Activated CD4-positive, alpha-beta T cell treated with anti-CD3 and anti-CD28 coated beads for 36 hours (primary cell): ENCODE measurements at regions of chr14 and their contacts with region 1.

Region 1: DNA sequence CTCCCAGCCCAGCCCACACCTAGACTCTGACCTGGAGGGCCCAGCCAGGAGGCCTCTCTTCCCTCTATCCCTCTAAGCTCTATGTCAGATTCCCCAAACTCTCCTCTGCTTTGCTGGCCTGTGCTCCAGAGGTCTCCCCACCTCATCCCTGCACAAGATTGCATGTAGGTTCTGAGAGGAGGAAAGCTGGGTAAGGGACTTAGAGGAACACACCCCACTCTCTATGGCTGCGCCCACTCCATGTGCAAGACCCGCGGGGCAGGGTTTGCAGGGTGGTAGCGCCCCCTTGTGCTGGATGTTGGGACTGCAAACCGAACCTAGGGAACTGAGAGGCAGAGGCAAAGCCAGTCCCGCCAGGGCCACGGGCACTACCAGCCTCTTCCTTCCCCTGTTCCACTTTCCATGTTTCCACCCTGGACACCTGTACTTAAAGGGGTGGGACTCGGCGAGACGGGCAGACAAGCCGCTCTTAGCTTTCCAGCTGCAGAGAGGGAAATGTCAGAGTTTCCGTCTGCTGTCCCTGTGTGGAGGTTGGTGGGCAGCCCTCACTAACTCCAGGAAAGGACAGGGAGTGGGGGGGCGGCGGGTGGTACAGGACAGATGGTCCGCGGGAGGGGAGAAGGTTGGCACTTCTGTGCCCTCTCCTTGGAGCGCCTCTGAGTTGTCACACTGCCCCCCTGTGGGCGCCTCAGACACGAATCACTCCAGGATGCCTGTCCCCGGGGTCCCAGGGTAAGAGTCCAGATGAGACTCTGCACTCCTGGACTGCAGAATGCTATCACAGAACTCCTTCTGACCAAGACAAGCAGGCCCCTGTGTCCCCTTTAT is 16.8 kb downstream of the MMP14 start:
- DNase-seq: peak; percentile 94
- ATAC-seq: peak; percentile 82
- H3K4me3 Mint-ChIP-seq: peak overlapping the region; percentile 69
- H3K27ac Mint-ChIP-seq: peak overlapping the region; percentile 81
- H3K4me1 Mint-ChIP-seq: peaks cover 26% of the 10 kb centered on the region
- H3K27me3 Mint-ChIP-seq: peaks cover 7% of the 10 kb centered on the region

Region 2: DNA sequence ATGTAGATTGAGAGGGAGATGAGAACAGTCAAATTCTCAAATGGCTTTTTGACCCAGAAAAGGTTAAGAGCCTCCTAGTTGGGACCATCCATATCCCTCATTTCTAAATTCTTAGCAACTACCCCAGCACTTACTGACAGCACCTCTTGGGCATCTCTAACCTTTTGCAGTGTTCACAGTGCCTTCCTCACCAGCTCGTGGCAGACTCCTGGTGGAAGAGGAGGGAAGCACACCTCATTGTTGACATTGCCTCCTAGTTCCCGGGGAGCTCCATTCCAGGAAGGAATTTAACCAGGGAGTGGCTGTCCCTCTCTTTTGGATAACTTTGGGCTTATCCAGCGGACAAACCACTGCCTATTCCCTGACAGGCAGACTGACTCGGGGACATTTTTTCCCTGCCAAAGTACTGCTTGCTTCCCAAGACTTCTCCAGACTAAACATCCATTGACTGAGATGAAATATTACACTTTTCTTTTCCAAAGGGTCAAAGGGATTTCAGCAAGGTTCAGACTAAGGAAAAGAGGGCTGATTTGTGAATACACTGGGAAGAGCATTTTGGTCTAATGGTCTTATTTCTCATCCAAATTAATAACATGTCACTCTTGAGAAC is 200.0 kb before region 1 on chr14:
- CTCF ChIA-PET with region 1: interaction called, 8 read pairs
- POLR2A ChIA-PET with region 1: no interaction called
- intact Hi-C with region 1: loop called (anchors 1 to 5 kb)
- DNase-seq: peak; percentile 75
- ATAC-seq: peak; percentile 80
- H3K4me3 Mint-ChIP-seq: no peak overlapping the region
- H3K27ac Mint-ChIP-seq: no peak overlapping the region
- H3K4me1 Mint-ChIP-seq: no peaks in the 10 kb centered on the region
- H3K27me3 Mint-ChIP-seq: no peaks in the 10 kb centered on the region

Region 3: DNA sequence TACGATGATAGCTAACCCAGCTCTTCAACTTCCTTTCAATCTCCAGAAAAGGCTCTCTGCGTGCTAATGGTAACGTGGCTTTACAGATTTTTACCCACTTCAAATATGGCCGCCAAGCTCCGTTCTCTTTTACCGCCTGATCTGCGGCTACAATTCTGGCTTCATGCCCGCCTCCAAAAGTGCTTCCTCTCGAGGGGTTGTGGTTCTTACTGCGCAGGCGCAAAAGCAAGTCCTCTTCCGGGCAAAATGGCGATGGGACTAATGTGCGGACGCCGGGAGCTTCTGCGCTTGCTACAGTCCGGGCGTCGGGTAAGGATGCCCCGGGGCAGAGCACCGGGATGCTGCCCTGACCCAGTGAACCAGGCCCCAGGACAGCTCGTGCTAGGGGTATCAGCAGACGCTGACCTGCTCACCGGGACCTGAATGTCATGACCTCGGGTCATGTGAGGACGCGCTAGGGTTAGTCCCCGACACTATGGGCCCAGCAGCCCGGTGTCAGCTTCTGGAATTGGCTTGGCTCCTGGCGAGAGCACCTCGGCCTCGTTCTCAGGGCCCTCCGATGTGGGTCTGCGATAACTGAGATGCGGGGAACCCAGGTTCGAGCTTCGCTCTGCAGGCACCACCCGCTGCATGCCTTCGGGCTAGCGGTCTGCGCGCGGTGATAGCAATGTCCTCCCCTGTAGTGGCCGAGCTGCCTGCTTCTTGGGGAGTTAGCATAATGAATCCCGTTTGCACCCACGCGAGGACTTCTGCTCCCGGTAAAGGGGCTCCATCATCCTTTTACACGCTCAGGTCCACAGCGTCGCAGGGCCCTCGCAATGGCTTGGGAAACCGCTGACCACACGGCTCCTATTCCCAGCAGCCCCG is 86.5 kb before region 1 on chr14 and contains the start of gene OXA1L:
- CTCF ChIA-PET with region 1: interaction called, 14 read pairs
- POLR2A ChIA-PET with region 1: no interaction called
- intact Hi-C with region 1: loop called (anchors 1 to 5 kb)
- DNase-seq: peak; percentile 98
- ATAC-seq: peak; percentile 87
- H3K4me3 Mint-ChIP-seq: peak within 1 kb of the TSS; percentile 90
- H3K27ac Mint-ChIP-seq: peak within 1 kb of the TSS; percentile 99
- H3K4me1 Mint-ChIP-seq: peaks cover 32% of the 10 kb centered on the region
- H3K27me3 Mint-ChIP-seq: no peaks in the 10 kb centered on the region
- total RNA-seq, gene OXA1L: 136 to 148 TPM

Region 4: GRCh38 chr14:22829661-22830442 is 23.3 kb before region 1 on chr14 and contains the start of gene MRPL52:
- CTCF ChIA-PET with region 1: interaction called, 148 read pairs
- POLR2A ChIA-PET with region 1: no interaction called
- intact Hi-C with region 1: no loop called
- DNase-seq: peak; percentile 94
- ATAC-seq: peak; percentile 92
- H3K4me3 Mint-ChIP-seq: peak within 1 kb of the TSS; percentile 82
- H3K27ac Mint-ChIP-seq: peak within 1 kb of the TSS; percentile 98
- H3K4me1 Mint-ChIP-seq: peaks cover 26% of the 10 kb centered on the region
- H3K27me3 Mint-ChIP-seq: no peaks in the 10 kb centered on the region
- total RNA-seq, gene MRPL52: 115 to 136 TPM

Region 5: DNA sequence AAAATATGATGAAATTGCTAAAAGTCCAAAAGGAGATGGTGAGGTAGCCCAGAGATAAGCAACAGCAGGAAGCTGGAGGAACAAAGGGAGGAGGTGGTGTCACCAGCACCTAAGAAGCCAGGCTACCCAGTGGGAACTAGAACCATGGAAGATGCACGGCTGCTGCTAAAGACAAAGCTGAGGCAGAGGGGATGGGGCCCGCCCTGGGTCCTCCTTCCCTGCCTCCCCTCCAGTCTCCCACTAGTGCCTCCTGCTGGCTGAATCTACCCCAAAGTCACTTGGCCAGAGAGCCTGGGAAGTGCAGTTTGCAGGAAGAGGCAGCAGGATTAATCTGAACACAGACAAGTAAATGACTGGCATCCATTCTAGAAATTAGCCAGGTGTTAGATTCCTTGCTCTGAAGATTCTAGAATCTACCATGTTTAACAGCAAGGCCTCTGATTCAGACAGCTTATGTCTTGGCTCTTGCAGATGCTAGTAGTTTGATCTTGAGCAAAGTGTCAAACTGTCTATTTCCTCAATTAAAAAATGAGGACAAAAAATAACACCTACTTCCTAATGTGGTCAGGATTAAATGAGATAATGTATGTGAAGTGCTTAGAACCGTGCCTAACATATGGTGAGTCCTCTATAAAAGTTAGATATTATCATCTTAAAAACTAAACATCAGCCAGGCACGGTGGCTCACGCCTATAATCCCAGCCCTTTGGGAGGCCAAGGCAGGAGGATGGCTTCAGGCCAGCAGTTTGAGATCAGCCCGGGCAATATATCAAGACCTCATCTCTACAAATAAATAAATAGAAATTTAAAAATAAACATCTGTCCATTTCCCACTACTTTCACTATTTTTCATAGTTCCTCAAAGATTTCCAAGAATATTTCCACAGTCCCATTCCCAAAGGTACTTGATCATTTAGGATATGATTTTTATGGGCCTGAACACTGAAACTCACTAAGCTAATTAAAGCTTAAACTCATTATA is 12.6 kb after region 1 on chr14:
- CTCF ChIA-PET with region 1: interaction called, 18 read pairs
- POLR2A ChIA-PET with region 1: no interaction called
- intact Hi-C with region 1: no loop called
- DNase-seq: peak; percentile 54
- ATAC-seq: peak; percentile 49
- H3K4me3 Mint-ChIP-seq: no peak overlapping the region
- H3K27ac Mint-ChIP-seq: no peak overlapping the region
- H3K4me1 Mint-ChIP-seq: peaks cover 20% of the 10 kb centered on the region
- H3K27me3 Mint-ChIP-seq: no peaks in the 10 kb centered on the region